ENCODE measurements at regions of chr4 and their contacts with region 1.

Region 1: GRCh38 chr4:78644744-78645330 is 93.3 kb downstream of the ANXA3 start:
- DNase-seq: peak; percentile 58
- CTCF ChIP-seq: peak; percentile 70

Region 2: DNA sequence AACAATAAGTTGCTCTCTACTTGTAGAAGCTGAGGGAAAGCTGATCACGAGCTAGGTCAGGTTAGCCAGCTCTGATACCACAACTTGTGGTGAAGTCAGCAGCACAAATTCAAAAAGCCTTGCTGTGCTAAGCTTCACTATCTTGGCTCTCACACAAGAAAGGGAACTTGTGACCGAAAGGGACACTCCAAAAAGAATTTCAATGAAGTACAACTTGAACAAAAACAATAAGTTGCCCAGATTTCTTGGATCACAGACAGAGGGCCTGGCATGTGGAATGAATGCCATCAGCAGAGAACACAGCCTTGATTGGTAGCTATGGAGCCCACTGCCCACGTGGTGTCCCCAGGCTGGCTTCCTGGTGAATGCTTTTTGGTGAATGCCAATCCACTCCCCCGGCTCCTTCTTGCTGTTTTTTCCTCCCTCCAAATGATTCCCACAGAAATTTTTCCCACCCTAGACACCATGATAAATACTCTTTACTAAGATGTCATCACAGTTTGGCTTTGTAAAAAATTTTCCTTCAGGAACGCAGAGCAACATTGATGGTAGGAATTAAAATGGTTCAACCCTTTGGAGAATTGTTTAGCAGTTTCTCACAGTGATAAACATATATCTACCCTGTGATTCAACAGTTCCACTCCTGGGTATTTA is 10.7 kb before region 1 on chr4:
- CTCF ChIA-PET with region 1: interaction called, 11 read pairs
- POLR2A ChIA-PET with region 1: no interaction called
- DNase-seq: no peak
- CTCF ChIP-seq: no peak

Region 3: GRCh38 chr4:78656968-78657445 is 12.2 kb after region 1 on chr4:
- CTCF ChIA-PET with region 1: interaction called, 20 read pairs
- POLR2A ChIA-PET with region 1: no interaction called
- DNase-seq: no peak
- CTCF ChIP-seq: no peak

Region 4: GRCh38 chr4:78661921-78662521 is 17.2 kb after region 1 on chr4:
- CTCF ChIA-PET with region 1: interaction called, 13 read pairs
- POLR2A ChIA-PET with region 1: no interaction called
- DNase-seq: peak; percentile 26
- CTCF ChIP-seq: no peak

Measured in GM10248 (cell line).